K562 (cell line): ENCODE measurements at regions of chr14 and their contacts with region 1.

Region 1: GRCh38 chr14:74207947-74208346 is 31.3 kb upstream of the VSX2 start:
- DNase-seq: peak in 1 of 4 experiments; percentile 18
- ATAC-seq: peak; percentile 45; the same call in 1 of the 3 replicates
- H3K4me3 ChIP-seq: no peak overlapping the region
- H3K27ac ChIP-seq: no peak overlapping the region
- H3K4me1 ChIP-seq: peaks cover 0 to 2% of the 10 kb centered on the region in 2 experiments; a peak in 1 of 5 replicates
- H3K27me3 ChIP-seq: no peaks in the 10 kb centered on the region
- CTCF ChIP-seq: peak; percentile 46 to 49 (median 48); a peak in 5 of 6 replicates
- EP300 ChIP-seq: no peak
- POLR2A ChIP-seq: no peak
- RAD21 ChIP-seq: peak in 1 of 2 experiments; percentile 51; a peak in 2 of 4 replicates

Region 2: GRCh38 chr14:74267588-74267987 is 59.6 kb after region 1 on chr14:
- CTCF ChIA-PET with region 1: no interaction called
- POLR2A ChIA-PET with region 1: no interaction called
- in situ Hi-C with region 1: no loop called
- intact Hi-C with region 1: no loop called
- DNase-seq: no peak
- ATAC-seq: no peak
- H3K4me3 ChIP-seq: no peak overlapping the region
- H3K27ac ChIP-seq: no peak overlapping the region
- H3K4me1 ChIP-seq: no peaks in the 10 kb centered on the region; a peak in 1 of 5 replicates
- H3K27me3 ChIP-seq: peaks cover 0 to 12% of the 10 kb centered on the region in 2 experiments; a peak in 2 of 5 replicates
- CTCF ChIP-seq: no peak
- EP300 ChIP-seq: no peak
- POLR2A ChIP-seq: no peak
- RAD21 ChIP-seq: no peak

Region 3: DNA sequence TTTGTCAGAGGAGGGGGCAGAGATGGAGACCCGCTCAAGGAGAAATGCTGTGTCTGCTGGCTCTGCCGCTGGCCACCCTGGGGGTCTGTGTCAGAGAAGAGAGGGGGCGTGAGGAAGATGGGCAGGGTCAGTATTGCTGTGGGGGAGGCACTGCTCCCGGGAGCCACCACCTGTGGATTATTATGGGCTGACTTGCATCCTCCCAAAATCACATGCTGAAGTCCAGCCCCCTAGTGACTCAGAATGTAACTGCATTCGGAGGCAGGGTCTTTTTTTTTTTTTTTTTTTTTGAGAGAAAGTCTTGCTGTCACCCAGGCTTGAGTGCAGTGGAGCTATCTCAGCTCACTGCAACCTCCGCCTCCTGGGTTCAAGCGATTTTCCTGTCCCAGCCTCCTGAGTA is 82.5 kb after region 1 on chr14:
- CTCF ChIA-PET with region 1: no interaction called
- POLR2A ChIA-PET with region 1: no interaction called
- in situ Hi-C with region 1: no loop called
- intact Hi-C with region 1: loop called (anchors 5 kb)
- DNase-seq: peak; percentile 47 to 61 (median 52)
- ATAC-seq: peak; percentile 65
- H3K4me3 ChIP-seq: no peak overlapping the region
- H3K27ac ChIP-seq: no peak overlapping the region
- H3K4me1 ChIP-seq: peaks cover 0 to 9% of the 10 kb centered on the region in 2 experiments; a peak in 3 of 5 replicates
- H3K27me3 ChIP-seq: no peaks in the 10 kb centered on the region
- CTCF ChIP-seq: peak; percentile 44 to 60 (median 58); a peak in 5 of 6 replicates
- EP300 ChIP-seq: no peak
- POLR2A ChIP-seq: no peak
- RAD21 ChIP-seq: no peak